AG04449 (cell line): ENCODE measurements at regions of chr7 and their contacts with region 1.

Region 1: GRCh38 chr7:139620676-139621344 is 97.3 kb downstream of the CLEC2L start:
- DNase-seq: no peak
- H3K4me3 ChIP-seq: no peak overlapping the region
- CTCF ChIP-seq: peak; percentile 56

Region 2: GRCh38 chr7:139431010-139431409 is 189.8 kb before region 1 on chr7:
- CTCF ChIA-PET with region 1: interaction called, 10 read pairs
- POLR2A ChIA-PET with region 1: no interaction called
- DNase-seq: no peak
- H3K4me3 ChIP-seq: no peak overlapping the region
- CTCF ChIP-seq: no peak

Region 3: GRCh38 chr7:139602143-139602722 is 18.6 kb before region 1 on chr7:
- CTCF ChIA-PET with region 1: interaction called, 53 read pairs
- POLR2A ChIA-PET with region 1: no interaction called
- DNase-seq: peak; percentile 10
- H3K4me3 ChIP-seq: no peak overlapping the region
- CTCF ChIP-seq: peak; percentile 54

Region 4: GRCh38 chr7:139771001-139771970 is 150.5 kb after region 1 on chr7:
- CTCF ChIA-PET with region 1: interaction called, 24 read pairs
- POLR2A ChIA-PET with region 1: no interaction called
- DNase-seq: peak; percentile 80
- H3K4me3 ChIP-seq: peak overlapping the region; percentile 24
- CTCF ChIP-seq: no peak

Region 5: GRCh38 chr7:139915864-139916716 is 295.3 kb after region 1 on chr7:
- CTCF ChIA-PET with region 1: interaction called, 11 read pairs
- POLR2A ChIA-PET with region 1: no interaction called
- DNase-seq: peak; percentile 85
- H3K4me3 ChIP-seq: no peak overlapping the region
- CTCF ChIP-seq: no peak

Region 6: GRCh38 chr7:139995017-139995931 is 374.5 kb after region 1 on chr7:
- CTCF ChIA-PET with region 1: interaction called, 296 read pairs
- POLR2A ChIA-PET with region 1: no interaction called
- DNase-seq: no peak
- H3K4me3 ChIP-seq: no peak overlapping the region
- CTCF ChIP-seq: no peak